RWPE1 (cell line): ENCODE measurements at regions of chr17 and their contacts with region 1.

Region 1: GRCh38 chr17:65100316-65101140 is 36.6 kb upstream of the RGS9 start:
- DNase-seq: peak; percentile 80
- H3K27ac ChIP-seq: peak overlapping the region; percentile 77
- CTCF ChIP-seq: peak; percentile 98

Region 2: GRCh38 chr17:65064452-65065019 is 36.0 kb before region 1 on chr17:
- CTCF ChIA-PET with region 1: interaction called, 16 read pairs
- POLR2A ChIA-PET with region 1: interaction called, 4 read pairs
- DNase-seq: peak; percentile 81
- H3K27ac ChIP-seq: peak overlapping the region; percentile 93
- CTCF ChIP-seq: no peak

Region 3: DNA sequence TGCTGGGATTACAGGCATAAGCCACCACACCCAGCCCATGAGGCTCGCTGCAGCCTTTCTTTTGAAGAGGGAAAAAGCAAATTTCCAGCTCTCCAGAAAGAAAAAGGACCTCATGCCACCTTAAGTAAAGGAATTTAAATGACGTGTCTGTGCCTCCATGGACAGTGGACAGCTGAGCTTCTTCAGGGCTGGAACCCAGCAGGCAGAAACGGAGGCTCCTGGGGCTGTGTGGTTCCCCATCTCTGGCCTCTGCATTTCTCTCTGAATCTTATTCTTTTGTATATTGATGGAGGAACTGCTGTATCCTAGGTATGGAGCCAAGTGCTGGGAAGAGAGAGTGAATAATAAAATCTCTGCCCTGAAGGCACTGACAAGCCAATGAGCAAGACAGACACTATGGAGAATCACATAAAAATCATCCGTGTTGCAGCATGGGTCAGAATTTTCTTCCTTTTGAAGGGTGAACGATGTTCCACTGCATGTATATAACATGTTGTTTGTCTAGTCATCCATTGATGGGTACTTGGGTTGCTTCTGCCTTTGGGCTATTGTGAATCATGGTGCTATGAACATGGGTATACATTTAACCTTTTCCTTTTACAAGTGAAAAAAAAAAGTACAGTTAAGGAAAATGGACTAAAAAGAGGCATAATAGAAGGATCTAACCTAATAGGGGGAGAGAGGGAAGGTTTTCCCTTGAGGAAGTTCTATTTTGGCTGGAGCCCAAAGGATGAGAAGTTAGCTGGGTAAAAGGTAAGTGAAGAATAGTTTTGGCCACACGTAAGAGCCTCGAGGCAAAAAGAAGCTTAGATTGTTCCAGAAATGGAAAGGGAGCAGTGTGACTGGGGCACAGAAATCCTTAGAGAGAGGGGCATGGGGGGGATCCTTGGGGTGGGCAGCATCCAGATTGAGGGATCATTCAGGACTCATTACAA is 11.8 kb before region 1 on chr17:
- CTCF ChIA-PET with region 1: interaction called, 6 read pairs
- POLR2A ChIA-PET with region 1: interaction called, 12 read pairs
- DNase-seq: no peak
- H3K27ac ChIP-seq: no peak overlapping the region
- CTCF ChIP-seq: no peak

Region 4: GRCh38 chr17:65254168-65254567 is 153.6 kb after region 1 on chr17:
- CTCF ChIA-PET with region 1: no interaction called
- POLR2A ChIA-PET with region 1: no interaction called
- DNase-seq: no peak
- H3K27ac ChIP-seq: no peak overlapping the region
- CTCF ChIP-seq: no peak